MCF 10A (cell line): ENCODE measurements at regions of chr9 and their contacts with region 1.

Region 1: DNA sequence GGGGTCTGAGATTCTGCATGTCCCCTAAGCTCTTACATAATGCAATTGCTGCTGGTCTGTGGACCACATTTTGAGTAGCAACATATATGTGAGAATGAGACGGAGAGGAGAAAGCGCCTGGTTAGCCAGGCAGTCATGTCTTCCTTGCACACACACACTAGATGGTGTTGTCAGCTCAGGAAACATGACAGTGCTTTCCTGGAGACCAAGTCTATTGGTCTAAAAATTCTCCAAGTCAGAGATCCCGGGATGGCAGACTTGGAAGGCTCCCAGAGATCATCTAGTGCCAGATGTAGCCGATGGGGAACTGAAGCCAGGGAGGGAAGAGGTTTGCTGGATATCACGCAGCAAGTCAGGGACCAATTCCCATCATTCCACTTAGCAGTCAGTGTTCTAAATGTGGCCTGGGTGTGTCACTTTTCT is 53.4 kb downstream of the GALNT12 start:
- DNase-seq: peak; percentile 86
- H3K4me3 Mint-ChIP-seq: no peak overlapping the region
- H3K27ac Mint-ChIP-seq: no peak overlapping the region
- H3K4me1 Mint-ChIP-seq: peaks cover 7% of the 10 kb centered on the region
- H3K27me3 Mint-ChIP-seq: peaks cover 26% of the 10 kb centered on the region
- CTCF ChIP-seq: peak; percentile 16

Region 2: DNA sequence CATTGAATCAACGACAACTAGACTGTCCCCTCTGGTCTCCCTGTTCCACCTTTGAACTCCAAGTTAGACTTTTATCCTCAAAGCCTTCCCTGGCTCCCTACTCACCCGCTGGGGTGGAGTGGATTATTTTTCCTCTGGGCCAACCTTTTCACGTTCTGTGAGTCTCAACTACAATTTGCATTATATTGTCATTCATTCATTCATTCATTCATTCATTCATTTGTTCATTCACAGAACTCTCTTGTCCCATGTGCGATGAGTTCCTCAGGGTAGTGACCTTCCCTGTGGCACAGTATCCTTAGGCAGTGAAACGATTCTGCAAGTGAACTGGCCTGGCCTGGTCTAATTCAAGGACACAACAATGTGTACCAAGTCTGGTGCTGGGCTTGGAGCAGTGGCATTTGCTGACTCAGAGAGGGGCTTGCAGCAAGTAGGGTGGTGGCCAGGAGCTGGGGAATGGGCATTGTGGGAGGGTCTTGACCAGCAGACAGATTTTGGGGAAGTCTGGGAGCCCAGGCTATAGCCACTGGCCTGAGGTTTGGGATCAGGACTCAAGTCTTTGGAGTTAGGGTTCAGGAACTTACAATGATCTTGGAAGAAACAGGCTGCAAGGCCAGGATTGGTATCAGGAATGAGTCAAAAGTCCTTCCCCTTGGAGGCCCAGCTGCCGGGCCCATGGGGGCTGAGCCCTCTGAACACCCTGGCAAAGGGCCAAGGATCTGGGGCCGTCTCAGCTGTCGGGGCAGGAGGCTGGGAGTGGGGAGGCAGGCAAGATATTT is 45.6 kb after region 1 on chr9:
- CTCF ChIA-PET with region 1: interaction called, 3 read pairs
- POLR2A ChIA-PET with region 1: no interaction called
- intact Hi-C with region 1: loop called (anchors 5 kb)
- DNase-seq: no peak
- H3K4me3 Mint-ChIP-seq: no peak overlapping the region
- H3K27ac Mint-ChIP-seq: no peak overlapping the region
- H3K4me1 Mint-ChIP-seq: peaks cover 11% of the 10 kb centered on the region
- H3K27me3 Mint-ChIP-seq: peaks cover 21% of the 10 kb centered on the region
- CTCF ChIP-seq: no peak